ENCODE measurements at regions of chr1 and their contacts with region 1.

Region 1: GRCh38 chr1:151130987-151131586 is 15.3 kb downstream of the SEMA6C start:
- DNase-seq: peak; percentile 74 to 94 (median 87)
- ATAC-seq: peak; percentile 100
- H3K4me3 Mint-ChIP-seq: peak overlapping the region; percentile 76 to 91 (median 84)
- H3K27ac Mint-ChIP-seq: peak overlapping the region; percentile 69 to 97 (median 92)
- H3K4me1 Mint-ChIP-seq: peaks cover 0 to 13% (median 12%) of the 10 kb centered on the region in 4 donors
- H3K27me3 Mint-ChIP-seq: no peaks in the 10 kb centered on the region

Region 2: DNA sequence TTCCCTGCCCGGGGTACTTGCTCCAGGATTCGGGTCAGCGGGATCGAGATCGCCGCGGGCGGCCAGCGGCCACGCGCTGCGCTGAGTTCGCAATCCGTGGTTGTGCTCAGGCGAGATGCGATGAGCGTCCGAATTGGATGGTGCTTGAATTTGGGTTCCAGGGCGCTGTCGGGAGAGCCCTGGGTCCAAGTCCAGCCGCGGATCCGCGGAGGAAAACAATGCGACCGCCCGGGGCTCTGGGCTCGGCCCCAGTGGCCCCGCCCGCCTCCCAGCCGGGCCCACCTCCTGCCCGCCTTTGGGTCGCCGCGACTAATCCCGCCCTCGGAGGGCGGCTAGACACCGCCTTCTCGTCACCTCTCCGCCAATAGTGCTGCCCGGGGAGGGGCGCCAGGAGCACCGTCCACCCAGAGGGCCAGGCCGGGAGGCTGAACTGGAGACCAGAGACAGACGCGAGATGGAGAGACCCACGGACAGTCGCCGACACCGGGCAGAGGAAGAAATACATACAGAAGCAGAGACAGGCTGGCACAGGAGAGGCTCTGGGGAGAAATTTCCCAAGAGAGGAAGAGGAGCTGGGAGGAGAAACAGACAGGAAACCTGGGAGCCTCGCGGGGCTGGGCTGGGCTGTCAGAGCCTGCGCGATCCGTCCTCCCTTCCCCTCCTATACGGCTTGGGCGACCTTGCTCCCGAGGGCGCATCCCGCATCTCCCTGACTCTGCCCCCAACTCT is 15.5 kb after region 1 on chr1 and contains the start of gene SEMA6C:
- POLR2A ChIA-PET with region 1: interaction called, 24 read pairs
- DNase-seq: peak; percentile 74 to 90 (median 82)
- ATAC-seq: peak; percentile 98 to 99
- H3K4me3 Mint-ChIP-seq: peak within 1 kb of the TSS; percentile 91 to 100 (median 97)
- H3K27ac Mint-ChIP-seq: peak within 1 kb of the TSS; percentile 61 to 97 (median 86)
- H3K4me1 Mint-ChIP-seq: peaks cover 11 to 23% (median 14%) of the 10 kb centered on the region in 4 donors
- H3K27me3 Mint-ChIP-seq: no peaks in the 10 kb centered on the region
- polyA plus RNA-seq, gene SEMA6C: 0.57 to 1.1 (median 0.81) TPM

Measured in naive thymus-derived CD8-positive, alpha-beta T cell (primary cell).